Heart right ventricle (tissue), 16 donors: ENCODE measurements at regions of chr4 and their contacts with region 1.

Region 1: GRCh38 chr4:56874923-56875322 is 32.8 kb upstream of the REST start:
- DNase-seq: no peak
- ATAC-seq: no peak
- H3K4me3 ChIP-seq: no peak overlapping the region
- H3K27ac ChIP-seq: no peak overlapping the region
- H3K4me1 ChIP-seq: peaks cover 0 to 17% (median 3%) of the 10 kb centered on the region in 9 donors
- H3K27me3 ChIP-seq: no peaks in the 10 kb centered on the region
- CTCF ChIP-seq: no peak

Region 2: GRCh38 chr4:56863441-56864139 is 11.3 kb before region 1 on chr4:
- intact Hi-C with region 1: loop called in 1 of 10 experiments (anchors 1 kb)
- DNase-seq: no peak
- ATAC-seq: no peak
- H3K4me3 ChIP-seq: no peak overlapping the region
- H3K27ac ChIP-seq: no peak overlapping the region
- H3K4me1 ChIP-seq: no peaks in the 10 kb centered on the region
- H3K27me3 ChIP-seq: no peaks in the 10 kb centered on the region
- CTCF ChIP-seq: no peak